Sigmoid colon (tissue), 7 donors: ENCODE measurements at regions of chr19 and their contacts with region 1.

Region 1: GRCh38 chr19:34677386-34678084 is at the start of gene ZNF302:
- DNase-seq: peak; percentile 98
- H3K4me3 ChIP-seq: peak within 1 kb of the TSS; percentile 64 to 91 (median 88)
- H3K27ac ChIP-seq: peak within 1 kb of the TSS; percentile 97 to 99 (median 98)
- H3K4me1 ChIP-seq: peaks cover 0 to 27% (median 12%) of the 10 kb centered on the region in 4 donors
- H3K27me3 ChIP-seq: no peaks in the 10 kb centered on the region
- CTCF ChIP-seq: no peak
- EP300 ChIP-seq: peak in 1 of 4 donors; percentile 26
- POLR2A ChIP-seq: peak; percentile 36 to 63
- total RNA-seq, gene ZNF302: 22.7 to 40.6 (median 37.0) TPM

Region 2: DNA sequence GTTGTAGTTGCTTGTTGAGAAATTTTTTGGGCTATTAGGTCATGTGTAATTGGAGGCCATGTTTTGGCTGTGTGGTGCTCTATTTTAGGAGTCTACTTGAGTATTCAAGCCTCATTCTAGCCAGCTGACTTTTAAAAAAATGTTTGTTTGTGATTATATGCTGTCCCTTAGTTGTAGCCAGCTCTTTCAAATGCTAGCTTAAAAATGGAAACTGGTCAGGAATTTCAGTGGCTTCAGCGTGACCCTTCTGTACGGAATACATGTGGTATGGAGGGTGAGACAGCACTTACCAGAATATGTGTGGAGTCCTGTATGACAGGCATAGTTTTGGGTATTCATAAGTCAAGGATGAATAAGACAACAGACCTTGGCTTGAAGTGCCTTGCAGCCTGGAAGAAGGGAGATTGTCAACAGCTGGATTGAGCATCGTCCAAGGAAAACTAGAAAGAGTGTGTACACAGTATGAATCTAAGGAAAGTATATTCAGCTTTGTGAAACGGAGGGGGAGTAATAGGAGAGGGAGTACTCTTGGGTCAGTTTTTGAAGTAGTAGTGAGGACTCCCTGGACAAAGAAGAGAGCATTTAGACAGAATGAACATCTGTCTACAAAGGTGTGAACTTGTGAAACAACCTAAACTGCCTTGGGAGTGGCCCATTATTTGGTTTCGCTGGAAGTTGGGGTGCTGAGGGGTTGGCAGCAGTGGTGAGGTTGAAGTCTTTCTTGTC is 216.0 kb before region 1 on chr19:
- intact Hi-C with region 1: no loop called
- DNase-seq: no peak
- H3K4me3 ChIP-seq: no peak overlapping the region
- H3K27ac ChIP-seq: peak overlapping the region in 1 of 4 donors; percentile 27
- H3K4me1 ChIP-seq: no peaks in the 10 kb centered on the region
- H3K27me3 ChIP-seq: no peaks in the 10 kb centered on the region
- CTCF ChIP-seq: no peak
- EP300 ChIP-seq: no peak
- POLR2A ChIP-seq: no peak

Region 3: GRCh38 chr19:34645551-34645950 is 32.0 kb before region 1 on chr19:
- intact Hi-C with region 1: no loop called
- DNase-seq: no peak
- H3K4me3 ChIP-seq: no peak overlapping the region
- H3K27ac ChIP-seq: no peak overlapping the region
- H3K4me1 ChIP-seq: no peaks in the 10 kb centered on the region
- H3K27me3 ChIP-seq: no peaks in the 10 kb centered on the region
- CTCF ChIP-seq: no peak
- EP300 ChIP-seq: no peak
- POLR2A ChIP-seq: no peak

Region 4: GRCh38 chr19:34712395-34713261 is 35.1 kb after region 1 on chr19:
- intact Hi-C with region 1: no loop called
- DNase-seq: no peak
- H3K4me3 ChIP-seq: no peak overlapping the region
- H3K27ac ChIP-seq: no peak overlapping the region
- H3K4me1 ChIP-seq: no peaks in the 10 kb centered on the region
- H3K27me3 ChIP-seq: no peaks in the 10 kb centered on the region
- CTCF ChIP-seq: peak; percentile 51 to 80 (median 64)
- EP300 ChIP-seq: no peak
- POLR2A ChIP-seq: no peak

Region 5: GRCh38 chr19:34733826-34734600 is 56.5 kb after region 1 on chr19 and contains the start of gene ZNF181:
- intact Hi-C with region 1: loop called (anchors 1 kb)
- DNase-seq: peak; percentile 94
- H3K4me3 ChIP-seq: peak within 1 kb of the TSS; percentile 68 to 90 (median 77)
- H3K27ac ChIP-seq: peak within 1 kb of the TSS; percentile 93 to 99 (median 96)
- H3K4me1 ChIP-seq: peaks cover 0 to 30% (median 26%) of the 10 kb centered on the region in 4 donors
- H3K27me3 ChIP-seq: no peaks in the 10 kb centered on the region
- CTCF ChIP-seq: no peak
- EP300 ChIP-seq: peak in 1 of 4 donors; percentile 23
- POLR2A ChIP-seq: peak in 1 of 2 donors; percentile 43
- total RNA-seq, gene ZNF181: 26.6 to 52.3 (median 42.4) TPM

Region 6: GRCh38 chr19:34772697-34773554 is 95.4 kb after region 1 on chr19 and contains the start of gene ZNF599:
- intact Hi-C with region 1: loop called (anchors 2 kb)
- DNase-seq: peak; percentile 95
- H3K4me3 ChIP-seq: peak within 1 kb of the TSS; percentile 70 to 87 (median 81)
- H3K27ac ChIP-seq: peak within 1 kb of the TSS; percentile 81 to 90 (median 86)
- H3K4me1 ChIP-seq: peaks cover 0 to 18% (median 12%) of the 10 kb centered on the region in 4 donors
- H3K27me3 ChIP-seq: no peaks in the 10 kb centered on the region
- CTCF ChIP-seq: no peak
- EP300 ChIP-seq: peak in 1 of 4 donors; percentile 63
- POLR2A ChIP-seq: peak; percentile 46 to 53
- total RNA-seq, gene ZNF599: 7.1 to 11.9 (median 7.3) TPM